ENCODE measurements at regions of chr13 and their contacts with region 1.

Region 1: DNA sequence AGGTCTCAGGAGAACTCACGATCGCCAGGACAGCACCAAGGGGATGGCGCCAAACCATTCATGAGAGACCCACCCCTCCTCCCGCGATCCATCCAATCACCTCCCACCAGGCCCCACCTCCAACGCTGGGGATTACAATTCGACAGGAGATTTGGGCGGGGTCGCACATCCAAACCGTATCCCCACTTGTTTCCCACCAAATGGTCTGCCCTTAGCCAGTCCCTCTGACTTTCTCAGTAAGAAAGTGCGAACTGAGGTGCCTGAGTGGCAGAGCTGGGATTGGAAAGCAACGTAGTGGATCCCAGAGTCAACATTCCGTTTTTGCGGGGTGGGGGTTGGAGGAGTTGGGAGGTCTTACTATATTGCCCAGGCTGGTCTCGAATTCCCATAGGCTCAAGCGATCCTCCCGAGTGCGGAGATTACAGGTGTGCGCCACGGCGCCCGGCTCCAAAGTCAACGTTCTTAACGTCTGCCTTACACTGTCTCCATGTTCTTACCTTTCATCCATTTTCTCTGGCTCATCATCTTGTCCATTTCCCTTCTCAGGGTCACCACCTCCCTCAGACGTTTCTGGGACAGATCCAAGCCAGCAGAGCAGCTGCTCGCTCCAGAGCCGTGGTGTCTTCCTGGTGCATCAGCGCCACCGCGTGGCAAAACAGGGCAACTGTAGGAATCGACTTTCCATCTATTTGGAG is 102.7 kb upstream of the ABCC4 start:
- DNase-seq: peak; percentile 83 to 87
- H3K4me3 ChIP-seq: peak overlapping the region; percentile 32
- H3K4me3 Mint-ChIP-seq: peak overlapping the region; percentile 73
- H3K27ac Mint-ChIP-seq: peak overlapping the region; percentile 42
- H3K4me1 ChIP-seq: no peaks in the 10 kb centered on the region; the same call in 1 of the 2 replicates
- H3K4me1 Mint-ChIP-seq: peaks cover 6% of the 10 kb centered on the region
- H3K27me3 ChIP-seq: no peaks in the 10 kb centered on the region
- H3K27me3 Mint-ChIP-seq: no peaks in the 10 kb centered on the region
- CTCF ChIP-seq: peak; percentile 91

Region 2: DNA sequence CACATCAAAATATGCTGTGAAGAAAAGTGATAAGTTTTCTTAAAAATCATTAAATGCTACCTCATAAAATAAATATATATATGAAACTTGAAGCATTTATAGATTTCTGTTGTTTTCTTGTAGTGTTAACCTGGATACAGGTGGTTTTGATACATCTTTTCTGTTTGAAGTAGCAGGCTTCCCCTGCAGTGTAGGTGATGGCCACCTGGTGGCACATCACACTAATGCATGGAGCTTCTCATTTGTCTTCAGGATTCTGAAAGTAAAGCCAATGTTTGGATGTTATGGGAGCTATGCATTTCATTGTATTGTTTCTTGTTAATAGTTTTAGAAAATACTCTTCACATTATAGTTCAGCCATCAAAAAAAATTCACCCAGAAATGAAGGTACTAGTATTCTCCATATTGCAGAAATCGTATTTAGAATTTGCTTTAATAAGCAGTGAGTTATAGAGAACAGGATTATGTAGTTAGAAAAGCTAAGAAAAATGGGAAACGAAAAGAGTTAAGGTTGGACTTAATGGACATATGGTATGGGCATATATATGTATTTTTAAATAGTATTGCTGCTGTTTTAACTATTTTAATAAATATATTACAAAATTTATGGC is 783.6 kb before region 1 on chr13:
- CTCF ChIA-PET with region 1: interaction called, 9 read pairs
- POLR2A ChIA-PET with region 1: no interaction called
- intact Hi-C with region 1: loop called (anchors 1 kb)
- DNase-seq: peak in 1 of 2 experiments; percentile 57
- H3K4me3 ChIP-seq: no peak overlapping the region
- H3K4me3 Mint-ChIP-seq: no peak overlapping the region
- H3K27ac Mint-ChIP-seq: no peak overlapping the region
- H3K4me1 ChIP-seq: no peaks in the 10 kb centered on the region
- H3K4me1 Mint-ChIP-seq: no peaks in the 10 kb centered on the region
- H3K27me3 ChIP-seq: no peaks in the 10 kb centered on the region
- H3K27me3 Mint-ChIP-seq: no peaks in the 10 kb centered on the region
- CTCF ChIP-seq: peak; percentile 80 to 89

Region 3: DNA sequence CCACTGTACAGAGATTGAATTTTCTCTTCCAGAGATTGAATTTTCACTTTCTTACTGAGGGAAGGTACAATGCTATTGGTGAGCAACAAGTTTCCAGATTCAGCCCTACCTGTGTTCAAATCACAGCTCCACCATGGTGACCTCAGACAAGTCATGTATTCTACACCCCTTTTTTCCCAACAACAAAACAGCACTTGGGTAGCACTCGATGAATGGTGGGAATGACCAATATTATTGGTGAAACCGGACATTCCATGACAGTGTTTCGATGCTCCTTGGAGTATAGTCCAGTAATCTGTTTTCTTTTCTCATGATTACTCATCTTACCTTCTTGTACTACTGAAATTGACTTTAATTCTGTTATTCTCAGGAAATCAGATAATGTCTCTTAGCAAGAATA is 425.5 kb before region 1 on chr13:
- CTCF ChIA-PET with region 1: no interaction called
- POLR2A ChIA-PET with region 1: no interaction called
- intact Hi-C with region 1: no loop called
- DNase-seq: no peak
- H3K4me3 ChIP-seq: no peak overlapping the region
- H3K4me3 Mint-ChIP-seq: no peak overlapping the region
- H3K27ac Mint-ChIP-seq: no peak overlapping the region
- H3K4me1 ChIP-seq: no peaks in the 10 kb centered on the region
- H3K4me1 Mint-ChIP-seq: no peaks in the 10 kb centered on the region
- H3K27me3 ChIP-seq: no peaks in the 10 kb centered on the region; the same call in 1 of the 2 replicates
- H3K27me3 Mint-ChIP-seq: peaks cover 8% of the 10 kb centered on the region
- CTCF ChIP-seq: no peak

Region 4: DNA sequence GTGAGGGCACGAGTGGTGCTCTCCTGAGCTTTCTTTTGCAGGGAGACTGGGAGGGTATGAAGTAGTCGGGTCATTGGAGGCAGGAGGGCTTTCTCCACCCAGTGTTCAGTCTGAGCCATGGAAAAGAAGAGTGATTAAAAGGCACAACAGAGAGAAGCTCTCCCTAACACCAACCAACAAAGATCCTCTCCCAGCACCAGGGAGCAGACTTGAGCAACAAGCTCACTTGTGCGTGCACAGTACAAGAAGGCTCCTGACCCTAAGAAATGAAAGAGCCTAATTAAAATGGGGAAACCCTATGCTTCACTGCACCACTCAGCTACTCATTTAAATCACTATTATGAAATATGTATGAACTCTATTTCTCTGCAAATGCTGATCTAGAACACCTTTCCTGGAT is 415.3 kb before region 1 on chr13:
- CTCF ChIA-PET with region 1: interaction called, 13 read pairs
- POLR2A ChIA-PET with region 1: no interaction called
- intact Hi-C with region 1: no loop called
- DNase-seq: peak in 1 of 2 experiments; percentile 15
- H3K4me3 ChIP-seq: no peak overlapping the region
- H3K4me3 Mint-ChIP-seq: no peak overlapping the region
- H3K27ac Mint-ChIP-seq: no peak overlapping the region
- H3K4me1 ChIP-seq: peaks cover 6% of the 10 kb centered on the region; the same call in 1 of the 2 replicates
- H3K4me1 Mint-ChIP-seq: peaks cover 7% of the 10 kb centered on the region
- H3K27me3 ChIP-seq: no peaks in the 10 kb centered on the region; the same call in 1 of the 2 replicates
- H3K27me3 Mint-ChIP-seq: peaks cover 2% of the 10 kb centered on the region
- CTCF ChIP-seq: peak in 1 of 2 experiments; percentile 20

Region 5: DNA sequence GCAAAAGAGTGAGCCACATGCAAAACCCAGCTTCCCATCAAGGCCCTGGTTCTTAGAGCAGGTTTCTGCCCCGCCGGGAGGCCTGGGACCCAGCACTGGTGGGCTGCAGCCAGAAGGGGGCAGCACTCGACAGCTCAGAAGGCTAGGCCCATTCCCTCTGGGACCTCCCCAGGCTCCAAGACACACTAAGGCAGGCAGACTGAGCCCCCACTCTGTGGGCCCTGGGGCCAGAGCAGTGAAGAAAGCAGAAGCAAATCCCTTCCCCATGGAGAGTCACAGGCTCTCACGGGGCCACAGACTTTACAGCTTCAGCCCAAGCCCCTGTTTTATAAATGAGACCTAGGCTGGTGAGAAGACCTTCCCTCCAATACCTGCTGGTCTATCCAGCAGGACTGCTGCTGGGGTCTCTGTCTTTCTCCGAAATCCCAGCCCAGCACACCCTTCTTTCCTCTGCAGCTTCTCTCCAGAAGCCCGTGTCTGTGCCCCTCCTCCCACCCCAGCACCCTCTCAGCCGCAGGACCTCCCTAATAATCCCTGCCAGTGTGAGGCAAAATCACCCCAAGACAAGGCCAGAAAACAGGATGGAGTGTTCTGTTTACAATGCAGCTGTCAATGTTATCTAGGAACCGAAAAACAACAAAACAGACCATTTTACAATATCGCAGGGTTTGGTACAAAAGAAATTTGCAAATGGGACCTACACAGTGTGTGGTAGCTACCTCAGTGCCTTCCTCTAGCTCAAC is 212.0 kb before region 1 on chr13:
- CTCF ChIA-PET with region 1: interaction called, 73 read pairs
- POLR2A ChIA-PET with region 1: no interaction called
- intact Hi-C with region 1: loop called (anchors 1 kb)
- DNase-seq: peak; percentile 81 to 90
- H3K4me3 ChIP-seq: no peak overlapping the region
- H3K4me3 Mint-ChIP-seq: no peak overlapping the region
- H3K27ac Mint-ChIP-seq: no peak overlapping the region
- H3K4me1 ChIP-seq: no peaks in the 10 kb centered on the region
- H3K4me1 Mint-ChIP-seq: no peaks in the 10 kb centered on the region
- H3K27me3 ChIP-seq: no peaks in the 10 kb centered on the region
- H3K27me3 Mint-ChIP-seq: no peaks in the 10 kb centered on the region
- CTCF ChIP-seq: peak; percentile 96 to 99

Region 6: DNA sequence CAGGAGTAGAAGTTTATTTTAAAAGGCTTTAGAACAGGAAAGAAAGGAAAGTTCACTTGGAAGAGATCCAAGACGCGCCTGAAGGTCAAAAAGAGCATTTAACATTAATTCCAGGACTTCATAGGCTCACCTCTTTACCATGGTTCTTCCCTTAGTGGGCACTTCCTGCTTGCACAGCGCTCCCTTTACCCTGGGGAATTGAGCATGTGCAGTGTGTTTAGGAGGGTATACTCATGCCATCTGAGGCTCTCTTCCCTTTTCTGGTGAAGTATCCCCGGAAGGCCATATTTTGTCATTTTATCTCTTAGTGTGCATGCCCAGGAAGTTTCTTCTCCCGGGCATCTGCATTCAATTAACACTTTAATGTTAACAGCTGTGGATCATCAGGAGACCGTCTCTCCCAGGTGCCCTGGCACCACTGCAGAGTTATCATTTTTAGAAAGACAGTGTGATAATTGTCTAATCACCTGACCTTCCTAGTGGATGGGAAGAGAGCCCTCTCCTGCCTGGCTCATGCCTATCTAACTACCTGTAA is 36.6 kb before region 1 on chr13:
- CTCF ChIA-PET with region 1: no interaction called
- POLR2A ChIA-PET with region 1: no interaction called
- intact Hi-C with region 1: no loop called
- DNase-seq: no peak
- H3K4me3 ChIP-seq: no peak overlapping the region
- H3K4me3 Mint-ChIP-seq: no peak overlapping the region
- H3K27ac Mint-ChIP-seq: no peak overlapping the region
- H3K4me1 ChIP-seq: no peaks in the 10 kb centered on the region
- H3K4me1 Mint-ChIP-seq: no peaks in the 10 kb centered on the region
- H3K27me3 ChIP-seq: no peaks in the 10 kb centered on the region
- H3K27me3 Mint-ChIP-seq: no peaks in the 10 kb centered on the region
- CTCF ChIP-seq: no peak

Region 7: DNA sequence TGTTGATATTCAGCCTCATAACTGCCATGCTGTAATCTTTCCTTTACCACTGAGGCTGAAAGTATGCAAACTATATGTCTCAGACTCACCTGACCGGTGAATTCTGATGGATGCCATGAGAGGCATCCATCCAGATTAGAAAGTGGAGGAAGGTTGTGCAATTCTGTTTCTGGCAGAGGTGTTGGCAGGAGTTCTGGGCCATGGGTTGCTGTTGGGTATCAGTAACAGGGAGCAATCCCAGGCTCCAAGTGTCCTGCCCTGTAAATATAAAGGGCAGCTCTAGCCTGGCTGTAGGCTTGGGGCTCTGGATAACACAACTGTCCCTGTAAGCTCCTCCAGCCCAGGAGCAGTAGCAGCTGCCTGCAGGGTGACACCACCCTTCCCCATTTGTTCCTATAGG is 25.4 kb before region 1 on chr13:
- CTCF ChIA-PET with region 1: interaction called, 24 read pairs
- POLR2A ChIA-PET with region 1: no interaction called
- intact Hi-C with region 1: loop called (anchors 1 kb)
- DNase-seq: no peak
- H3K4me3 ChIP-seq: no peak overlapping the region
- H3K4me3 Mint-ChIP-seq: no peak overlapping the region
- H3K27ac Mint-ChIP-seq: no peak overlapping the region
- H3K4me1 ChIP-seq: no peaks in the 10 kb centered on the region
- H3K4me1 Mint-ChIP-seq: peaks cover 11% of the 10 kb centered on the region
- H3K27me3 ChIP-seq: no peaks in the 10 kb centered on the region
- H3K27me3 Mint-ChIP-seq: no peaks in the 10 kb centered on the region
- CTCF ChIP-seq: no peak

Region 8: DNA sequence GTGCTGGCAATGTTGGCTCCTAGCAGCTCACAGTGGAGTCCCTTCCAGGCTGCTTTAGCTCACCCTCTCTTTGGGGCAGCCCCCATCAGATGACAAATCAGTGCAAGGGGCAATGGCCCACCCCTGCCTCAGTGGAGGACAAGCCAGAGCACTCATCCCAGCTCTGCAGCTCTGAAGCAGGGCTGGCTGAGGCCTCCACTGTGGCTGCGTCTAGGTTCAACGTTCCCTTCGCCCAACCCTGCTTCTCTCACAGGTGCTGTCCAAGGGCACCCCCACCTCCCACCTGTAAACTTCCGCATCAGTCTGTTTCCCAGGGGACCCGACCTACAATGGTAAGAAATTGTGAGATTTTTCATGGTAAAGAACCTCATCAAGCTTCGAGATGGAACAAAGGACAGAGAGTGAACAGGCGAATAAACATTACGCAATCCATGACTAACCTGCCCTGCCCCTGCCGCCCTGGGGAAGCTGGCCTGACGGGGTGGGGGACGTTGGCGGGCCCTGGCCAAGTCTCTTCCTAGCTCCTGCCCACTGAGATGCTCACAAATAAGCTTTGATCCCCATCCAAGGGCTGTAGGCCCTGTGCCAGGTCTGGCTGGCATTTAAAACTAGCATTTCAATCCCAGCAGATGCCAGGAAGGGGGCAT is 200.0 kb after region 1 on chr13:
- CTCF ChIA-PET with region 1: interaction called, 11 read pairs
- POLR2A ChIA-PET with region 1: no interaction called
- intact Hi-C with region 1: no loop called
- DNase-seq: peak in 1 of 2 experiments; percentile 10
- H3K4me3 ChIP-seq: no peak overlapping the region
- H3K4me3 Mint-ChIP-seq: no peak overlapping the region
- H3K27ac Mint-ChIP-seq: no peak overlapping the region
- H3K4me1 ChIP-seq: peaks cover 7% of the 10 kb centered on the region
- H3K4me1 Mint-ChIP-seq: no peaks in the 10 kb centered on the region
- H3K27me3 ChIP-seq: no peaks in the 10 kb centered on the region
- H3K27me3 Mint-ChIP-seq: no peaks in the 10 kb centered on the region
- CTCF ChIP-seq: no peak

Region 9: GRCh38 chr13:95644601-95645052 is 240.7 kb after region 1 on chr13 and contains the start of gene DZIP1:
- CTCF ChIA-PET with region 1: no interaction called
- POLR2A ChIA-PET with region 1: no interaction called
- intact Hi-C with region 1: no loop called
- DNase-seq: peak; percentile 74 to 80
- H3K4me3 ChIP-seq: peak within 1 kb of the TSS; percentile 30
- H3K4me3 Mint-ChIP-seq: peak within 1 kb of the TSS; percentile 81
- H3K27ac Mint-ChIP-seq: no peak within 1 kb of the TSS
- H3K4me1 ChIP-seq: 0 out of 2 replicates have a peak, but pooled peaks cover 9% of the 10 kb centered on the region
- H3K4me1 Mint-ChIP-seq: no peaks in the 10 kb centered on the region
- H3K27me3 ChIP-seq: no peaks in the 10 kb centered on the region
- H3K27me3 Mint-ChIP-seq: no peaks in the 10 kb centered on the region
- CTCF ChIP-seq: no peak
- total RNA-seq, gene DZIP1: 6.5 and 8.1 TPM in 2 replicates